Breast epithelium (tissue), 4 donors: ENCODE measurements at regions of chr17 and their contacts with region 1.

Region 1: GRCh38 chr17:10429421-10430045 is 7.8 kb upstream of the MYH8 start:
- DNase-seq: no peak
- H3K4me3 ChIP-seq: no peak overlapping the region
- H3K27ac ChIP-seq: no peak overlapping the region
- H3K4me1 ChIP-seq: no peaks in the 10 kb centered on the region
- H3K27me3 ChIP-seq: no peaks in the 10 kb centered on the region
- CTCF ChIP-seq: no peak
- POLR2A ChIP-seq: no peak

Region 2: DNA sequence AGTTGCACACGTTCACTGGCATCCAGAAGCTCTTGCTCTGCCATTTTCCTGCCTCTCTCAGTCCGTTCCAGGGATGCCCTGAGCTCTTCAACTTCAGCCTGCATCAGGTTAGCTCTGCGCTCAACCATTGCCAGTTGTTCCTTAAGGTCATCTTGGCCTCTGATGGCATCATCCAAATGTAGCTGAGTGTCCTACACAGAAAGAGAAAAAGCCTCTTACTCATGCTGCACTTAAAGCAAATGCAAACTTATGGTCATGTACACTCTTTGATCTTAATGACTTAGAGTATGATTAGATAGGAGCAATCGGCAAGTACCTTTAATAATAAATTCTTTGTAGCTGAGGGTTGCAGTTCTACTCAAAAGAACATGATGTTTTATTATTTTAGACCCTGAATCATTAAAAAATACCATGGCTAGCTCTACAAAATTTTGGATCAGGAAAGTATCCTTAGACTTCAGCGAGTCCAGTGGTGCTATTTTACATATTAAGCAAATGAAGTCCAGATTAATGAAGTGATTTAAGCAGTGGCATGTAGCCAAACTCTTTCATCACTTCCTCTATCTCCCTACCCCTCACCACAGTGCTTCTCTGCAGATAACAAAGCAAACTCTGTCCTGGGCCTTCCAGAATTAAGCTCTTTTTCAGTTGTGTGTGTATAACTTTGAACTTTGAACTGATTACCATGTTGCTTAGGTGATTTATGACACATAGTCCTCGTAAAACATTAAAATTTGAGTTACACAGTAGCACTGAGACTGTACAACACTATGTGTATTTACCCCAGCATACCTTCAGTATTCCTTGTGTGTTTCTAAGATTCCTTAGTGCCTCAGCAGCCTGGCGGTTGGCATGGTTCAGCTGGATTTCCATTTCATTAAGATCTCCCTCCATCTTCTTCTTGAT is 17.7 kb after region 1 on chr17:
- intact Hi-C with region 1: loop called (anchors 1 kb)
- DNase-seq: no peak
- H3K4me3 ChIP-seq: no peak overlapping the region
- H3K27ac ChIP-seq: no peak overlapping the region
- H3K4me1 ChIP-seq: no peaks in the 10 kb centered on the region
- H3K27me3 ChIP-seq: no peaks in the 10 kb centered on the region
- CTCF ChIP-seq: no peak
- POLR2A ChIP-seq: no peak

Region 3: GRCh38 chr17:10471853-10472252 is 42.3 kb after region 1 on chr17:
- intact Hi-C with region 1: no loop called
- DNase-seq: no peak
- H3K4me3 ChIP-seq: no peak overlapping the region
- H3K27ac ChIP-seq: no peak overlapping the region
- H3K4me1 ChIP-seq: no peaks in the 10 kb centered on the region
- H3K27me3 ChIP-seq: no peaks in the 10 kb centered on the region
- CTCF ChIP-seq: no peak
- POLR2A ChIP-seq: no peak

Region 4: DNA sequence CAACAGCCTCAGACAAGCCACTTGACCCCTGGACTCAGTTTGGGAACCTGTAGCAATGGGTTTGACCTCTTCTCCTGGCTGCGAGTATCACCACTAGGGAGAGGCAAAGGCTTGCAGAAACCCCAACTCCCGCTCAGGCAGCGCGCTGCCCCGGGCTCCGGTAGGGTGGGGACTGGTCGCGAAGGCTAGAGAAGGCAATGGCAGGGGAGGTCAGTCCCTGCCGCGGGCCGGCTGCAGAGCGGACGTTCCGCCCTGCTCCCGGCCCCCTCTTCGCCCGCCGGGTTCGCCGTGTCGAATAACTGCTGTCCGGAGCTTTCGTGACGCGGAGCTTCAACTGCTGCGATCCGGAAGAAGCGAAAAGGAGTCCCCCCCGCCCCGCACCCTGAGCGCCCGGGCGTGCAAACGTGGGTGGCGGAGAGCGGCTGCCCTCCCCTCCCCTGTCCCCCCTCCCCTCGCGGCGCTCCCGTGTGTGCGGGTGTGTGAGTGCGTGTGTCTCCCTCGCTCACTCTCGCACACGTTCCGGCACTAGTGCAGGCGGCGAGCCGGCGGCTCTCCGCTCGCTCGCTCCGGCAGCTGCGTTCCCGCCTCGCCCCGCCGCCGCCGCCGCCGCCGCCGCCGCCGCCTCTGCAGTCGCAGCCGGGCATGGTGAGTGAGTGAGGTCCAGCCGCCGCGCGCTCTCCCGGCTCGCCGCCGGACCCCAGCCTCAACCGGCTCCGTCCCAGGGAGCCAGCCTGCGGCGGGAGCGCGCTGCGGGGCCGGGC is 810.7 kb after region 1 on chr17:
- intact Hi-C with region 1: no loop called
- DNase-seq: no peak
- H3K4me3 ChIP-seq: peak overlapping the region; percentile 49 to 61 (median 56)
- H3K27ac ChIP-seq: peak overlapping the region in 1 of 2 donors; percentile 52
- H3K4me1 ChIP-seq: peaks cover 0 to 5% of the 10 kb centered on the region in 2 donors
- H3K27me3 ChIP-seq: peaks cover 9 to 64% of the 10 kb centered on the region in 2 donors
- CTCF ChIP-seq: no peak
- POLR2A ChIP-seq: no peak